Activated CD4-positive, alpha-beta T cell treated with anti-CD3 and anti-CD28 coated beads for 36 hours (primary cell): ENCODE measurements at regions of chr6 and their contacts with region 1.

Region 1: DNA sequence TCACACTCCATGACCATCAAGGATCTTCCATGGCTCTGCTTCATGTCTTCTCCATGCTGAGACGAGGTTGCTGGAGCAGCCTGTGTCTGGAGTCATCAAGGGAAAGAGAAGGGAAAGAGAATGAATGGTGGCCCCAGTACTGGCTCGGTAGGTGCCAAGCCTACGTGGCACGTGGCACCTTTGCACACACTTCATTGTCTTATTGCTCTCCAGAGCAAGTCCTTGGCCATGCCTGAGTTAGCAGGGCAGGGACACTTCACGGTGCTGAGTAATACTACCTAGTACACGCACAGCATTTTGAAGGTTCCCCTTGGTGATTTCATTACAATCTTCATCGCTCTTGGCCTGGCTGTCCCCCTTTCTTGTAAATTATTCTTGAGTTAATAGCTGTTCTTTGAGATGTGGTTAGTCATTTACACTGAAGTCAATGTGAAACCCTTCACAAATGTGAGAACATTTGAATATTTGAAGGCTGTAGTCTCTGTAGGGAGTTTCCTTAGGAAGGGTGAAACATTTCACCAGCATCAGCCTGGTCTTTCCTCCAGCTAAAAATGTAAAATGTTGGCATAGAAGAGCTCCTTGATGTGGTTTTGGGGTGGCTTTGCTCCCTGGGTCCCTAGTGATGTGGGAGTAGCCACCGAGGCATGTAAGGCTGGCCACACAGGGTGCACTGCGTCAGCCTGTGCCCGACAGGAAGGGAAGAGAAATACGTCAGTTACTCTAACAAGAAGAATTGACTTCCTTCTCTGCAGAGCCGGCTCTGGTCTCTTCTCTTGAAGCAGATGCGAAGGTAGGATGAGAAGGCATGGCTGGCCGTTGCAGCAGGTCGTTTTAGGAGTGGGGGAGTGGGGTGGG is at the start of gene SYTL3:
- DNase-seq: peak; percentile 93
- ATAC-seq: peak; percentile 62
- H3K4me3 Mint-ChIP-seq: peak within 1 kb of the TSS; percentile 81
- H3K27ac Mint-ChIP-seq: peak within 1 kb of the TSS; percentile 88
- H3K4me1 Mint-ChIP-seq: peaks cover 72% of the 10 kb centered on the region
- H3K27me3 Mint-ChIP-seq: no peaks in the 10 kb centered on the region
- total RNA-seq, gene SYTL3: 163 to 180 TPM

Region 2: GRCh38 chr6:157764178-157765033 is 885.1 kb before region 1 on chr6:
- CTCF ChIA-PET with region 1: no interaction called
- POLR2A ChIA-PET with region 1: no interaction called
- intact Hi-C with region 1: loop called (anchors 1 to 2 kb)
- DNase-seq: peak; percentile 93
- ATAC-seq: peak; percentile 69
- H3K4me3 Mint-ChIP-seq: peak overlapping the region; percentile 41
- H3K27ac Mint-ChIP-seq: peak overlapping the region; percentile 91
- H3K4me1 Mint-ChIP-seq: peaks cover 87% of the 10 kb centered on the region
- H3K27me3 Mint-ChIP-seq: peaks cover 2% of the 10 kb centered on the region

Region 3: DNA sequence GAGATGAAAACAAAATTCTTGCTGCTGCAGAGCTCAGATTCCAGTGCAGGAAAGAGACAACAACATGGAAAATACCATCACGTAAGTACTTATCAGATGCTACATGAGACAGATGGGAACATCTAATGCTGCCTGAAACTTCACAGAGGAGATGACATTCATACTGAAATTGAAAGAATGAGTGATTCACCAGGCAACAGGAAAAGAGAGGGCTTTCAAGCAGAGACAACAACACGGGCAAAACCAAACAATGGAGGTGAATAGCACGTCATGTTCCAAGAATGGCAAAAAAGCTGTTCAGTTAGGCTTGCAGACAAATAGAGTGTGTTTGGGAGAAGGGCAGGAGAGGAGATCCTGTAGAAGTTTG is 442.1 kb before region 1 on chr6:
- CTCF ChIA-PET with region 1: no interaction called
- POLR2A ChIA-PET with region 1: interaction called, 10 read pairs
- intact Hi-C with region 1: loop called (anchors 1 to 2 kb)
- DNase-seq: peak; percentile 57
- ATAC-seq: peak; percentile 95
- H3K4me3 Mint-ChIP-seq: peak overlapping the region; percentile 15
- H3K27ac Mint-ChIP-seq: peak overlapping the region; percentile 90
- H3K4me1 Mint-ChIP-seq: peaks cover 32% of the 10 kb centered on the region
- H3K27me3 Mint-ChIP-seq: peaks cover 5% of the 10 kb centered on the region

Region 4: DNA sequence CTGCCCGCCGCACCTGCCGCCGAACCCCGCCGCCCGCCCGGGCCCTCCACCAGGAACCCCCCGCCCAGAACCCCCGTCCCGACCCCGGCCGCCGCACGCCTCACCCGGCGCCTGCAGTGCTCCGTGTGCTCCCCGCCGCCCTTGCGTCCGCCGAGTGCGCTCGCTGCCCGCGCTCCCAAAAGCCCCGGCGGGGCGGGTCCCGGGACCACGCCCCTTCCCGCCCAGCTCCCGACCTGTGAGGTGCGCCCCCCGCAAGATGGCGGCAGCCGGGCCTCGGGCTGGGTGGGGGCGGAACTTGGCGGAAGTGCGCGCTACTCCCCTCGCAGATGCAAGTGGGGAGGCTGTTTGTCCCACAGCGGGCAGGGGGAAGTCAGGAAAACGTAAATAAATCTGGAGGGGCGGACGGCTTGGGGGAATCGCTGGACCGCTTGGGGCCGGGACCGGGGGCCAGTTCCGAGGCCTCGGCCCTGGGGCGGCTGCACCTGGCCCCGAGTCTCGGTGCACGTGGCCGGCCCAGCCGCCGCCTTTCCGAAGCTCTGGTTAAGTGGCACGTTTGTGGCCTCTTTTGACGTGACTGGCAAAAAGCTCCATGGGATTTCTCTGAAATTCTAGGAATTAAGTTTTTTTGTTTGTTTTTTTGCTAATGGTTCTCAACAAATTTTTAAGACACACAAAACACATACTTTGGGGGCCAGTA is 169.8 kb after region 1 on chr6 and contains the start of gene EZR:
- CTCF ChIA-PET with region 1: no interaction called
- POLR2A ChIA-PET with region 1: interaction called, 7 read pairs
- intact Hi-C with region 1: loop called (anchors 2 kb)
- DNase-seq: peak; percentile 91
- ATAC-seq: peak; percentile 52
- H3K4me3 Mint-ChIP-seq: peak within 1 kb of the TSS; percentile 93
- H3K27ac Mint-ChIP-seq: peak within 1 kb of the TSS; percentile 87
- H3K4me1 Mint-ChIP-seq: peaks cover 38% of the 10 kb centered on the region
- H3K27me3 Mint-ChIP-seq: no peaks in the 10 kb centered on the region
- total RNA-seq, gene EZR: 197 to 203 TPM

Region 5: DNA sequence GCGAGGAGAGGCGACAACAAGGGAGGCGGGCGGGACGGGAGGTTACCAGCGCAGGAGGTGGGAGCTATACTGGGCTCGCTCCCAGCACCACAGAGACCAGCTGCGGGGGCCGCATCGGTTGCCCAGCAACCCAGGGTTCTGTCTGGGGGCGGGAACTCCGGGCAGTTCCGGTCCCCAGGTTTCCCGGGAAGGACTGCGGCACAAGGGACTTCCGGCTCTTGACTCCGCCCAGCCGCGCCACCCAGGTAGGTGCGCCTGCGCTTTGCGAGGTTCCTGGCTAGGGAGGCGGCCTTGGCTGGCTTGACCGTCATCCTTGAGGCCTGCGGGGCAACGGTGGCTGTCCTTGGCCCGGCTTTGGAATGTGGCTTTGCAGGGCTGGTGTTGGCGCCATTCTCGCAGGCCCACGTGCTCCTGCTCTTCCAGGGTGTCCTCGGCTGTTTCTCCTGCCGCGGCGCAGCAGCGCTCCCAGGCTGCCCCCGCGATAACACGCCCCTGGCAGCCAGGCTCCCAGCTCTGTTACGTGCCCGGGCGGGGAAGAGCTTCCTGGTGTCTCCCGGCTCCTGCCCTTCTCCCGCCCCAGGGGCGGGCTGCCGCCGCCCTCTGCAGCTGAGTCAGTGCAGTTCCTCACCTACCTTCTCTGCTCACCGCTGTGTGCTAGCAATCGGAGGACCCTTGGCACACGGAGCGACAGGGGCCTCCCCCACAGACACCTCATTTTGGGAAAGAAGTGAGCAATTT is 350.3 kb after region 1 on chr6 and contains the start of gene RSPH3:
- CTCF ChIA-PET with region 1: no interaction called
- POLR2A ChIA-PET with region 1: no interaction called
- intact Hi-C with region 1: loop called in 1 of 2 experiments (anchors 2 kb)
- DNase-seq: peak; percentile 97
- ATAC-seq: peak; percentile 86
- H3K4me3 Mint-ChIP-seq: peak within 1 kb of the TSS; percentile 82
- H3K27ac Mint-ChIP-seq: peak within 1 kb of the TSS; percentile 66
- H3K4me1 Mint-ChIP-seq: peaks cover 46% of the 10 kb centered on the region
- H3K27me3 Mint-ChIP-seq: no peaks in the 10 kb centered on the region
- total RNA-seq, gene RSPH3: 6.5 to 9.3 TPM

Region 6: DNA sequence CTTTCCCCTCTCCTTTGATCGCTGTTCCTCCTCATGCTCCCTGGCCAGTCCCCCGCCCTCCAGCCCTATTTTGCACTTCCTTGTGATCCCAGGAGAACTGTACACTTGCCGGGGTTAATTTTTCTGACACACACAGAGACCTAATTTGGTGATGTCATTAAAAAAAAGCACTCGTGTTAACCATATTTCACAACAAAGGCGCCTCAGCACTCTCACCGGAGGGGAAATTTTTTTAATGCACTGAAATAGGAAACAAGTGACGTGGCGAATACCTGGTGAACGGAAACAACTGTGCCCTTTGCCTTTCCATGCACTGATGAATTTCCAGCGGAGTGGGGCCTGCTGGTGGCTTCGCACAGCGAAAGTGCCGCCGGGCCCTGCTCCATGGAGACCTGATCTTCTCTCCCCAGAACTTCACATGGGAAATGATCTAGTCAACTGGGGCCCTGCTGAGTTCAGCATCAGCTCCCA is 449.2 kb after region 1 on chr6:
- CTCF ChIA-PET with region 1: no interaction called
- POLR2A ChIA-PET with region 1: no interaction called
- intact Hi-C with region 1: loop called in 1 of 2 experiments (anchors 1 kb)
- DNase-seq: peak; percentile 80
- ATAC-seq: peak; percentile 52
- H3K4me3 Mint-ChIP-seq: peak overlapping the region; percentile 54
- H3K27ac Mint-ChIP-seq: peak overlapping the region; percentile 91
- H3K4me1 Mint-ChIP-seq: peaks cover 83% of the 10 kb centered on the region
- H3K27me3 Mint-ChIP-seq: no peaks in the 10 kb centered on the region

Region 7: DNA sequence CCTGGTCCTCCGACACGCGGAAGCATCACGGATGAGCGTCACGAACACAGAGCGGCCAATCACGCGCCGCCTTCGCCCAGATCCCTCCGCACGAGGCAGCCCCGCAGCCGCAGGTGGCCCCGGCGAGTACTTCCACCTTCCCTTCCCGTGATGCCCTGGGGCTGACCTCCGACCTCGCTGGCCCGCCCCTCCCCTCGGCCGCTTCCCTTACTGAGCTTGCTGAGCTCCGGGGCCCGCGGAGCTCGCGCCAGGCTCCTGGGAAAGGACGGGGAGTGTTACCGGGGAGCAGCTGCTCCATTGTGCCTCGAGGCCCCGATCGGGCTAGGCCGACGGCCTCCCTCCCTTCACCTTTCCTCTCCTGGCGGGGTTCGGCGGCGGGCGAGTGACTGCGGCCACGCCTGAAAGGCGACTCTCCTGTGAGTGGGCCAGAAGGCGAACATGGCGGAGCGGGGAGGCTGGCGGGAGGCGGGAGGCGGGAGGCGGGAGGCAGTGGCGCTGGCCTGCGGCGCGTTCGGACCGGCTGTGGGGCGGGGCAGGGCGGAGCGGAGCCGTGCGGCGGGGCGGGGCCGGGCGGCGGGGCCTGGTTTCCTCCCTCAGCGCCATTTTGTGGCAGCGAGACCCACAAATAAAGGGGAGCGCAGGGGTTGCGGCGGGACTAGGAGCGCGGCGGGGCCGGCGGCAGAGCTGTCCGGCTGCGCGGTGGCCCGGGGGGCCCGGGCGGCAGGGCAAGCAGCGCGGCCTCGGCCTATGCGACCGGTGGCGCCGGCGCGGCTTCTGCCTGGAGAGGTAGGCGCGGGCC is 1077.6 kb after region 1 on chr6 and contains the start of gene WTAP:
- CTCF ChIA-PET with region 1: no interaction called
- POLR2A ChIA-PET with region 1: no interaction called
- intact Hi-C with region 1: loop called in 1 of 2 experiments (anchors 1 kb)
- DNase-seq: peak; percentile 99
- ATAC-seq: peak; percentile 91
- H3K4me3 Mint-ChIP-seq: peak within 1 kb of the TSS; percentile 95
- H3K27ac Mint-ChIP-seq: peak within 1 kb of the TSS; percentile 98
- H3K4me1 Mint-ChIP-seq: peaks cover 47% of the 10 kb centered on the region
- H3K27me3 Mint-ChIP-seq: no peaks in the 10 kb centered on the region
- total RNA-seq, gene WTAP: 87.2 to 91.5 TPM